Panc1 (cell line): ENCODE measurements at regions of chr5 and their contacts with region 1.

Region 1: DNA sequence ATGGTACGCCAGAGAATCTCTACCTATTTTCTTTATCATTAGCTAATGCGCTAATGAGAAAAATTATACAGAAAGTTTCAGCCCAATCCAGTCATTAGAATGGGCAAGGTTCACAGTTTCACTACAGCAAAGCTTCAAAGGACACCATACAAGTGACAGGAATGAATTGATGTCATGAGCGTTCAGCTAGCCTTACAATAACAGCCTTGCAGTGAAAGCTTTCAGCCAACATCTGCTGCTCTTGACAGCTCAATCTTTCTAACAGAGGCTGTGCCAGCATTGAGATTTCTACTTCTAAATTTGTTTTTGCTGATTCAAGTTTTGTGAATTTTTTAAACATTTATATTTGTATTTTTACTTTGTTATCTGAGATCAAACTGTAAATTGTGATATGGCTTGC is 302.4 kb upstream of the FAM174A start:
- DNase-seq: no peak
- ATAC-seq: no peak
- H3K4me3 ChIP-seq: no peak overlapping the region
- H3K27ac ChIP-seq: no peak overlapping the region
- H3K4me1 ChIP-seq: no peaks in the 10 kb centered on the region
- H3K27me3 ChIP-seq: no peaks in the 10 kb centered on the region
- CTCF ChIP-seq: no peak

Region 2: GRCh38 chr5:99460701-99461100 is 772.0 kb before region 1 on chr5:
- CTCF ChIA-PET with region 1: no interaction called
- POLR2A ChIA-PET with region 1: interaction called, 13 read pairs
- in situ Hi-C with region 1: no loop called
- intact Hi-C with region 1: no loop called
- DNase-seq: no peak
- ATAC-seq: no peak
- H3K4me3 ChIP-seq: no peak overlapping the region
- H3K27ac ChIP-seq: no peak overlapping the region
- H3K4me1 ChIP-seq: no peaks in the 10 kb centered on the region
- H3K27me3 ChIP-seq: no peaks in the 10 kb centered on the region
- CTCF ChIP-seq: no peak